ENCODE measurements at regions of chr7 and their contacts with region 1.

Region 1: DNA sequence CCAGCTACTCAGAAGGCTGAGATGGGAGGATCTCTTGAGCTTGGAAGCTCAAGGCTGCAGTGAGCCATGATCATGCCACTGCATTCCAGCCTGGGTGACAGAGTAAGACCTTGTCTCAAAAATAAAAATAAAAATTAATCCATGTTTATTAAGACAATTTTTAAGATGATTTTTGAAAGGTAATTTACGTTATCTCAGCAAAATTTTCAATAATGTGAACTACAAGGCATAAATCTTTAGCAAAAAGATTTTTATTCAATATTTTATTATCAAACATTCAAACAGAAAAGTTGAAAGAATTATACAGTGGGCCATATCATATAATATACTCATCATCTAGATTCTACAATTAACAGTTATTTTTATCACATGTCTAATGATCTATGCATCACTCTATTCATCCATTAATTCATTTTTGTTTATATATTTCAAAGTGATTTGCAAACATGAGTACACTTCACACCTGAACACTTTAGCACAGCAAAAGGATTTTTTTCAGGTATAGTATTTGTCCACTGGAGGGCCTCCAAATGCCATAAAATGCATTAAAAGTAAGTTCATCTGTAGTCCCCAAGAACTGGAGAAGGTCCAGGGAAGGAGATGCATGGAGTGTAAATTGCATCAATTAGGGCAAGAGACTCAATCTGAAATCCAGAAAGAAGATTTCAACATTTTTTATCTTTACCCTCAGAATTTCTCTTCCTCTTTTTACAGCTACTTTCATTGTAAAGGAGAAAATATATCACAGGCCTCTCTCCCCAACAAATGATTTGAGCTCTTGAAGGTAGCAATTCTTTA is 38.6 kb upstream of the RSBN1L start:
- DNase-seq: peak; percentile 2
- H3K4me3 Mint-ChIP-seq: no peak overlapping the region
- H3K27ac Mint-ChIP-seq: no peak overlapping the region
- H3K4me1 Mint-ChIP-seq: no peaks in the 10 kb centered on the region
- H3K27me3 Mint-ChIP-seq: no peaks in the 10 kb centered on the region

Region 2: DNA sequence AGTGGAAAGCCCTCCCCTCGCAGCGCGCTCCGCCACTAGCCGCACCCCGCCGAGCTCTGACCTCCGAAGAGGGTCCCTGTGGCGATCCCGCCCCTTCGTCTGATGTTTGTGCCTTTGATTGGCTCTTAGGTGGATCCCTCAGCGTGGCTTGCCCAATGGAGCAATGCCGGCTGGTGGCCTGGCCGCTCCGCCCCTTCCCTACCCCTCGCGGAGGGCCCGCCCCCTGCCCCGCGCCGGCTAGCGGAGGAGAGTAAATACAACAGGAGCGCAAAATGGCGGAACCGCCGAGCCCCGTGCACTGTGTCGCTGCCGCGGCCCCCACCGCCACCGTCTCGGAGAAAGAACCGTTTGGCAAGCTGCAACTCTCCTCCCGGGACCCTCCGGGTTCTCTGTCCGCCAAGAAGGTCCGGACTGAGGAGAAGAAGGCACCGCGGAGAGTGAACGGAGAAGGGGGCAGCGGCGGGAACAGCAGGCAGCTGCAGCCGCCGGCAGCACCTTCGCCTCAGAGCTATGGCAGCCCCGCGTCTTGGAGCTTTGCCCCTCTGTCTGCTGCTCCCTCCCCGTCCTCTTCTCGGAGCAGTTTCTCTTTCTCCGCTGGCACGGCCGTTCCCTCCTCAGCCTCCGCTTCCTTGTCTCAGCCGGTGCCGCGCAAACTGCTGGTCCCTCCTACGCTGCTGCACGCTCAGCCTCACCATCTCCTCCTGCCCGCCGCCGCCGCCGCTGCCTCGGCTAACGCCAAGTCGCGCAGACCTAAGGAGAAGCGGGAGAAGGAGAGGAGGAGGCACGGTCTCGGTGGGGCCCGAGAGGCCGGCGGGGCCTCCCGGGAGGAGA is 38.8 kb after region 1 on chr7 and contains the start of gene RSBN1L:
- intact Hi-C with region 1: loop called (anchors 2 kb)
- DNase-seq: peak; percentile 98
- H3K4me3 Mint-ChIP-seq: peak within 1 kb of the TSS; percentile 99
- H3K27ac Mint-ChIP-seq: peak within 1 kb of the TSS; percentile 94
- H3K4me1 Mint-ChIP-seq: peaks cover 55% of the 10 kb centered on the region
- H3K27me3 Mint-ChIP-seq: no peaks in the 10 kb centered on the region
- total RNA-seq, gene RSBN1L: 27.9 and 30.6 TPM in 2 replicates

Region 3: DNA sequence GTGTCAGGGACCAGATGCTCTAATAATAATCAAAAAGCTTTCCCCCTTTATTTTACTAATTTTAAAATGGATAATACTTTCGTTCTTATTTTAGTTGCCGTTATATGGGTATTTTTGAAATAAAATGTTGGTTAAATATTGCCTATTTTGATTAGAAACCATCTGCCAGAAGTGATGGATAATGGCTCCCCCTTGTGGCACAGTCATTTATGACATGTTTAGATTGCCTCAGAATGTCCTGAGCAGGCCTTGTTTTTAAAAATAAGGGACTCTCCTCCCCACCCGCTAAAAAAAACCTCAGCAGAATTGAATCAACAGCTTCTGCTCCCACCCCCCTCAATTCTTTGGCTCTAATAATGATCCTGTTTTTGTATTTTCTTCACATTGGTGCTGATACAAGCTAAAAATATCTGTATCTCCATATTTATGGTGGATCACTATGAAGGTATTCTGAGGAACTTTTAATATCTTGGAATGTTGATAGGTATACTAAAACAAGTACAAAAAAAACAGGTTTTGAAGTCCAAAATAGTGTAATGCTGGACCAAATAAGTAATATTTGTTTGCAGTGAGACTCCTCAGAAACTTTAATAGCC is 101.8 kb after region 1 on chr7:
- intact Hi-C with region 1: loop called (anchors 1 kb)
- DNase-seq: peak; percentile 51
- H3K4me3 Mint-ChIP-seq: no peak overlapping the region
- H3K27ac Mint-ChIP-seq: no peak overlapping the region
- H3K4me1 Mint-ChIP-seq: peaks cover 25% of the 10 kb centered on the region
- H3K27me3 Mint-ChIP-seq: no peaks in the 10 kb centered on the region

Region 4: GRCh38 chr7:77940647-77941046 is 283.0 kb after region 1 on chr7:
- intact Hi-C with region 1: loop called (anchors 1 kb)
- DNase-seq: no peak
- H3K4me3 Mint-ChIP-seq: no peak overlapping the region
- H3K27ac Mint-ChIP-seq: no peak overlapping the region
- H3K4me1 Mint-ChIP-seq: peaks cover 11% of the 10 kb centered on the region
- H3K27me3 Mint-ChIP-seq: no peaks in the 10 kb centered on the region

Region 5: GRCh38 chr7:78039790-78040776 is 382.5 kb after region 1 on chr7:
- intact Hi-C with region 1: loop called (anchors 5 kb)
- DNase-seq: no peak
- H3K4me3 Mint-ChIP-seq: no peak overlapping the region
- H3K27ac Mint-ChIP-seq: no peak overlapping the region
- H3K4me1 Mint-ChIP-seq: no peaks in the 10 kb centered on the region
- H3K27me3 Mint-ChIP-seq: peaks cover 12% of the 10 kb centered on the region

Region 6: GRCh38 chr7:78463039-78463438 is 805.4 kb after region 1 on chr7:
- intact Hi-C with region 1: no loop called
- DNase-seq: no peak
- H3K4me3 Mint-ChIP-seq: no peak overlapping the region
- H3K27ac Mint-ChIP-seq: no peak overlapping the region
- H3K4me1 Mint-ChIP-seq: no peaks in the 10 kb centered on the region
- H3K27me3 Mint-ChIP-seq: no peaks in the 10 kb centered on the region